Upper lobe of right lung (tissue), 1 donor: ENCODE measurements at regions of chr2 and their contacts with region 1.

Region 1: DNA sequence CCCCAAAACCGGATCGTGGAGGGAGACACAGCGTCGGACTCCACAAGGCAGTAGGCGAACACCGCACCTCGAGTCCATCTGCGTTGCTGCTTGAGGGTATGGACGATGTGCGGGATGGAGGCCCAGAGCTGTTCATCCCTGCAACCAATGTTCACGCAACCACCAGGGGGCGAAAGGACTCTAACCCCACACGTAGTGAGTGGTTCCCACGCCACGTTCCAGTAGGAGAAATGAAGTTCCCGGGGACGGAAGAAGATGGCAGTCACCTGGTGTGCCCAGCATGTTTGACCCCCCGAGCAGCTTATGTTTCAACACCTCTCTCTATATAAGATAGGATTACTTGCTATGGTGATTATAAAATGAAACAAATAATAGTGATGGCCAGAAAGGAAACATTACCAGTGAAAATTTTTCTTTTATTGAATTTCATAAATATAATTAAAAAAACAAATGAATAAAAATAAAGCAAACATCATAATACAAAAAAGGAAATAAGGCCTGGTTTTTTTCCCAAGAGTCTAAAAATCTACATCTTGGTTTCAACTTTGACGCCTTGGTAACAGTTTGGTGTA is 184.3 kb downstream of the SH3BP4 start:
- DNase-seq: peak; percentile 85
- ATAC-seq: peak; percentile 91
- H3K4me3 ChIP-seq: no peak overlapping the region
- H3K27ac ChIP-seq: no peak overlapping the region
- H3K4me1 ChIP-seq: no peaks in the 10 kb centered on the region
- H3K27me3 ChIP-seq: no peaks in the 10 kb centered on the region
- CTCF ChIP-seq: peak; percentile 73

Region 2: DNA sequence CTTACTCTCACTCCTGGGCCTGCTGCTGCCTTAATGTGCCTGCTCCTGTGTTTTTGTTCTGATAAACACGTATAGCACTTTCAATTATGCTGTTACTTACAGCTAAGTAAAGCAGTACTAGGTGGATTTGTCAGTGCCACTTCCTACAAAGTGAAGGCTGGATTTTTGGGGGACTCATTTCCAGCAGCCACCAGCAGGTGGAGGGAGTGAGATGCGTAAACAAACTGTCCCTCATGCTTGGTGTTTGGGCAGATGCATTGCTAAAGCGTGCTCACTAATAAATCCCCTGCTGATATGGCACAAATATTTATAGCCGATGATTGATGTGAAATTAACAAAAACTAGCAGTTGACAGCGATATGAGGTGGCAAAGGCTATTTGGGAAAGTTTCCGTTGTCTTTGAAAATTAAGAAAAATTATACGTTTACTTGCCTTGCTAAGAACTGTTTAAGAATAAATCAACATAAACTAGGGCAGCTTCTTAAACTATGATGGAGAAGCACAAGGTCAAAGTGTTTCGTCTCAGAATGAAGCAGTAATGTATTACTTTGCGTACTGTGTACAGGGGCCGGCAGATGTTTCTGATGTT is 459.4 kb after region 1 on chr2:
- intact Hi-C with region 1: loop called (anchors 5 kb)
- DNase-seq: no peak
- ATAC-seq: peak; percentile 67
- H3K4me3 ChIP-seq: no peak overlapping the region
- H3K27ac ChIP-seq: no peak overlapping the region
- H3K4me1 ChIP-seq: peaks cover 4% of the 10 kb centered on the region
- H3K27me3 ChIP-seq: no peaks in the 10 kb centered on the region
- CTCF ChIP-seq: peak; percentile 86